ENCODE measurements at regions of chr6 and their contacts with region 1.

Region 1: GRCh38 chr6:108651340-108652227 is 90.9 kb downstream of the FOXO3 start:
- DNase-seq: no peak
- H3K4me3 ChIP-seq: no peak overlapping the region
- H3K27ac ChIP-seq: no peak overlapping the region
- H3K4me1 ChIP-seq: peaks cover 0 to 7% (median 2%) of the 10 kb centered on the region in 4 experiments
- H3K27me3 ChIP-seq: no peaks in the 10 kb centered on the region

Region 2: GRCh38 chr6:108638993-108639392 is 12.6 kb before region 1 on chr6:
- CTCF ChIA-PET with region 1: interaction called, 14 read pairs
- POLR2A ChIA-PET with region 1: no interaction called
- DNase-seq: no peak
- H3K4me3 ChIP-seq: no peak overlapping the region
- H3K27ac ChIP-seq: no peak overlapping the region
- H3K4me1 ChIP-seq: peaks cover 2 to 16% (median 11%) of the 10 kb centered on the region in 4 experiments
- H3K27me3 ChIP-seq: no peaks in the 10 kb centered on the region

Measured in common myeloid progenitor, CD34-positive (primary cell).